ENCODE measurements at regions of chr19 and their contacts with region 1.

Region 1: GRCh38 chr19:1807722-1808397 is 4.2 kb downstream of the ATP8B3 start:
- DNase-seq: no peak
- H3K4me3 ChIP-seq: no peak overlapping the region
- H3K27ac ChIP-seq: peak overlapping the region in 1 of 4 donors; percentile 25
- H3K4me1 ChIP-seq: peaks cover 10 to 50% (median 15%) of the 10 kb centered on the region in 3 donors
- H3K27me3 ChIP-seq: no peaks in the 10 kb centered on the region
- CTCF ChIP-seq: no peak
- POLR2A ChIP-seq: no peak

Region 2: DNA sequence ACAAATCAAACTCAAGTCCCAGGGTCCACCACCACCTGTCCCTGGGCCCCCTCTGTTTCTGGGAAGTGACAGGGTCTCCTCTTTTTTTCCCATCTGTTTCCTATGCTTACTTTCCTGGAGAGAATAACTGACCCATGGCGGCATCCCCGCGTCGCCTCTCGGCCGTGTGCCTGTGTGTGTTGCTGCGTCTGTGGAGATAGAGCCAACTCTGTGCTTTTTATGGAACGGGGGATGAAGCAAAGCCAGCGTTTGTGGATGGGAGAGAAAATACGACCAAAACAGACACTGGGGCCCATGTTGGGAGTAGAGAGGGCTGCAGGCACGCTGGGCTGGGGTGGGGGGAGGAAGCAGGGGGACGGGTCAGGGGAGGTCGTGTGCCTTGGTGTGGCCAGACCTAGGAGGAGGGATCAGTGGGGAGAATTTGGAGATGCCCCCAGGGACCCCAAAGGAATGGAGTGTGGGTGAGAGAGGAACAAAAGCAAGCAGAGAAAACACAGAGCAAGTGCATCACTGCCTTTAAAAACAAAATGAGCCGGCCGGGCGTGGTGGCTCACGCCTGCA is 267.4 kb before region 1 on chr19:
- intact Hi-C with region 1: loop called (anchors 10 kb)
- DNase-seq: no peak
- H3K4me3 ChIP-seq: no peak overlapping the region
- H3K27ac ChIP-seq: peak overlapping the region in 3 of 4 donors; percentile 9 to 44 (median 42)
- H3K4me1 ChIP-seq: peaks cover 0 to 14% (median 0%) of the 10 kb centered on the region in 3 donors
- H3K27me3 ChIP-seq: peaks cover 0 to 61% (median 0%) of the 10 kb centered on the region in 4 donors
- CTCF ChIP-seq: no peak
- POLR2A ChIP-seq: no peak

Region 3: DNA sequence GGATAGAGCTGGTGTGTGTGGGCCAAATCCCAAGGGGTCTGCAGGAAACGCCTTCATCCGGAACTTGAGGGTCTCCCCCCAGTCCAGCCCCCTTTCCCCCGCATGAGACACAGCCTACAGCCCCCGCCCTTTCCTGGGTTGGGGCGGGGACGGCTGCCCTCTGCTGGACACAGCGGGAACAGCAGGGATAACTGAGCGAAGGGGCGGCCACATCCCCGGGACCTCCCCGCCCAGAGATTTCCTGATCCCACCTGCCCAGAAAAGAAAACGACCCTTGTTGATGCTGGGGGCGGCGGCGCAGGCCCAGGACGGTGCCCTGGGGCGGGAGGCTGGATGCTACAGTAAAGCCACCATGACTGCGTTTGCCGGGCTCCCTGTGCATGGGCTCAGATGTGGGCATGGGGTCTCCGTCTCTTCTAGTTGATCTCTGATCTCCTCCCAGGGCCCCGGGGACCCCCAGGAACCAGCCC is 40.4 kb before region 1 on chr19:
- intact Hi-C with region 1: no loop called
- DNase-seq: no peak
- H3K4me3 ChIP-seq: no peak overlapping the region
- H3K27ac ChIP-seq: no peak overlapping the region
- H3K4me1 ChIP-seq: peaks cover 0 to 7% (median 4%) of the 10 kb centered on the region in 3 donors
- H3K27me3 ChIP-seq: peaks cover 9 to 99% (median 54%) of the 10 kb centered on the region in 4 donors
- CTCF ChIP-seq: peak; percentile 87 to 99 (median 93)
- POLR2A ChIP-seq: no peak

Region 4: DNA sequence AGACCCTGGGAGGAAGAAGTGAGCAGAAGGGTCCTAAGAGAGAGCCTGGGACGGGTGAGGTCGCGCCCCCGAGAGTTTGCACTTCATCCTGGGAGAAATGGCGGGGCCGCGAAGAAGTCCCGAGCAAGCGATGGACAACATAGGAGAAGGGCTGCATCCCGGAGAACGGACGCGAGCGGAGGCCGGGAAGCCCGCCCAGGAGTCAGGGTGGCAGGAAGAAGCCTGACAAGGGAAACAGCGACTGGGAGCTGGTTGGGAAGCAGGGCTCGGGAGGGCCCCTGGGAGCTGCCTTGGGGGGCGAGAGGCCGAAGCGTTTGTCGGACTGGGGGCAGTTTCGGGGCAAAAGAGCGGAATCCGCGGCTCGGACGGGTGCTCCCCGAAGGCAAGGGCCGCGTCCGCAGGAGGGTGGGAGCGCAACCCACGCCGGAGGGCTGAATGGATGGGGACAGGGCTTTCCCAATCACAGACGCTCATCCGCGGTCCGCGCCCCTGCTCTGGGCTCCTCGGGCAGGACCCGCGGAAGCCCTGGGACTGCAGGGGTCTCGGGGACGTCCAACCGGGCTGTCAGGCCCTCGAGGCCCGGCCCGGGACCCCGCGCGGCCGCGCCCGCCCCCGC is 77.0 kb after region 1 on chr19:
- intact Hi-C with region 1: no loop called
- DNase-seq: no peak
- H3K4me3 ChIP-seq: peak overlapping the region; percentile 72 to 98 (median 96)
- H3K27ac ChIP-seq: peak overlapping the region; percentile 94 to 96 (median 96)
- H3K4me1 ChIP-seq: peaks cover 38 to 54% (median 44%) of the 10 kb centered on the region in 3 donors
- H3K27me3 ChIP-seq: no peaks in the 10 kb centered on the region
- CTCF ChIP-seq: no peak
- POLR2A ChIP-seq: no peak

Region 5: GRCh38 chr19:2127758-2128157 is 319.9 kb after region 1 on chr19:
- intact Hi-C with region 1: no loop called
- DNase-seq: no peak
- H3K4me3 ChIP-seq: no peak overlapping the region
- H3K27ac ChIP-seq: no peak overlapping the region
- H3K4me1 ChIP-seq: no peaks in the 10 kb centered on the region
- H3K27me3 ChIP-seq: no peaks in the 10 kb centered on the region
- CTCF ChIP-seq: no peak
- POLR2A ChIP-seq: no peak

Measured in esophagus squamous epithelium (tissue), 5 donors.